PC-3 (cell line): ENCODE measurements at regions of chr15 and their contacts with region 1.

Region 1: DNA sequence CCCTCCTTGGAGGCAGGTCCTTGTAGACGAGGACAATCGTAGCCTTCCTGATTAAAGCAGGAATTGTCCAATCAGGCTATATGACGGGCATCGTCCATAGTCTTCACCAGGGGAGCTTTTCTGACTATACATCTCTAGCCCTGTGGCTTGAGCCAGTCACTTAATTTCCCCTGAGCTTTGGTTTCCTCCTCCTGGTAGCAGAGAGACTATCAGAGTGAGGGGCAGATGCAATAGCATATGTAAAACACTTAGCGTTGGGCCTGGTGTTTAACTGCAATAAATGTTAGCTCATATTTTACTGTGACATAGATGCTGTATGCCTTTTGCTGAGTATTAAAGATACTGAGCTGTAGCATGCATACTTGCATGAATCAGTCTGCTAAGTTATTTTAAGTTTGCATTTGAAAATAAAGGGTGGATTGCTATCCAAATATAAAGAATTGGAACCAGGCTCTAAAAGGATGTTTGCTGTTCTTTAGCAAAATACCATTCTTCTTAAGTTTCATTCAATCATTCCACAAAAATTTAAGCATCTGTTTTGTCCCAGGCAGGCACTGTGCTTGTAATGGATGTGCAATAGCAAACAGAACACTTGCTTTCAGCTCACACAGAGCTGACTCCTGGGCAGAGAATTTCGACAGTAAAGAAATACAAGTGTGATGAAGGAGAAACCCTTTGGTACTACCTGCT is 151.2 kb downstream of the PGPEP1L start:
- DNase-seq: peak; percentile 74
- ATAC-seq: peak; percentile 29
- H3K4me3 ChIP-seq: 0 out of 2 replicates have a peak overlapping the region, but pooled peaks have one; percentile 11
- H3K27ac ChIP-seq: peak overlapping the region; percentile 60
- H3K4me1 ChIP-seq: peaks cover 74% of the 10 kb centered on the region
- H3K27me3 ChIP-seq: no peaks in the 10 kb centered on the region
- CTCF ChIP-seq: no peak

Region 2: GRCh38 chr15:98873441-98874201 is 17.3 kb after region 1 on chr15:
- CTCF ChIA-PET with region 1: interaction called, 6 read pairs
- POLR2A ChIA-PET with region 1: interaction called, 4 read pairs
- intact Hi-C with region 1: loop called (anchors 2 kb)
- DNase-seq: peak; percentile 94
- ATAC-seq: peak; percentile 80
- H3K4me3 ChIP-seq: peak overlapping the region; percentile 55
- H3K27ac ChIP-seq: peak overlapping the region; percentile 94
- H3K4me1 ChIP-seq: peaks cover 54% of the 10 kb centered on the region
- H3K27me3 ChIP-seq: no peaks in the 10 kb centered on the region
- CTCF ChIP-seq: peak; percentile 47

Region 3: DNA sequence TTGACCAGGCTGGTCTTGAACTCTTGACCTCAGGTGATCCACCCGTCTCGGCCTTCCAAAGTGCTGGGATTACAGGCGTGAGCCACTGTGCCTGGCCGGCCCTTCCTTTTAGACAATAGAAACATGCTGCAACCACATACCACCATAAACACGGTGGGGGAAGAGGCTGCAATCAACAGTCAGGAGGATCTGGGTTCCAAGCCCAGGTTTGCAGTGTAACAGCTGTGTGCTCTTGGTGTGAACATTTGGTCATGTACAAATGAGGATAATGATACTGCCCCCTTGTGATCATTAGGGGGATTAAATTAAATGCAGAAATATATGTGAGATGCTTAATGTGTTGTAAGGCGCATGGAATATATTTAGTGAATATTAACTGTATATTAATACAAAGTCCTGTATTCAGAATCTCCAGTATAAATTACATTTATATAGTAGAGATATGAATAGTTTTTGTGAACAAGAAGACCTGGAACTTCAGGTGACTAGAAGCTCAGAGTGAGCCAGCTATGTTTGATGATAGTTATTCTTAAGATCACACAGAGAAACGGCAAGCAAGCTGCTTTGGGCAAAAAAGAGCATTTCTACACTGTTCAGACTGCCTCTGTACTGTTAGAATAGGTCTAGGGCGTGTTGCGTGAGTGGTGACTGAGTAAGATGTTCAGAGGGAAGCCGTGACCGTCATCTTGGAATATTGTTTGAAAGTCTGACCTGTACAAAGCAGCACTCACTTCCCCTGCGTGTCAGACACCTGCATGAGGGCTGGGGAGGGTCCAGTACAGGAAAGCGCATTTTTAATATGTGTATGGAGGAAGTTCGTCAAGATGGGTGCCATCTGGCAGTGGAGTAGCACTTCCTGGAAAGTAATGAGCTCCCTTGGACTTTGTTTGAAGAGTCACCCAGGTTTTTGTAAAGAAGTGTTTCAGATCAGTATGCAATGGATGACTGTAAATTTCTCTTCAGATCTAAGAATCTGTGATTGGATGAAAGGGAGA is 25.5 kb after region 1 on chr15:
- CTCF ChIA-PET with region 1: interaction called, 15 read pairs
- POLR2A ChIA-PET with region 1: no interaction called
- intact Hi-C with region 1: loop called (anchors 1 kb)
- DNase-seq: peak; percentile 65
- ATAC-seq: peak; percentile 59
- H3K4me3 ChIP-seq: no peak overlapping the region
- H3K27ac ChIP-seq: no peak overlapping the region
- H3K4me1 ChIP-seq: peaks cover 9% of the 10 kb centered on the region
- H3K27me3 ChIP-seq: no peaks in the 10 kb centered on the region
- CTCF ChIP-seq: peak; percentile 66

Region 4: GRCh38 chr15:98904544-98904943 is 48.2 kb after region 1 on chr15:
- CTCF ChIA-PET with region 1: interaction called, 5 read pairs
- POLR2A ChIA-PET with region 1: no interaction called
- intact Hi-C with region 1: loop called (anchors 1 kb)
- DNase-seq: peak; percentile 60
- ATAC-seq: peak; percentile 50
- H3K4me3 ChIP-seq: no peak overlapping the region
- H3K27ac ChIP-seq: peak overlapping the region; percentile 81; the same call in 1 of the 2 replicates
- H3K4me1 ChIP-seq: peaks cover 53% of the 10 kb centered on the region
- H3K27me3 ChIP-seq: no peaks in the 10 kb centered on the region
- CTCF ChIP-seq: peak; percentile 84

Region 5: DNA sequence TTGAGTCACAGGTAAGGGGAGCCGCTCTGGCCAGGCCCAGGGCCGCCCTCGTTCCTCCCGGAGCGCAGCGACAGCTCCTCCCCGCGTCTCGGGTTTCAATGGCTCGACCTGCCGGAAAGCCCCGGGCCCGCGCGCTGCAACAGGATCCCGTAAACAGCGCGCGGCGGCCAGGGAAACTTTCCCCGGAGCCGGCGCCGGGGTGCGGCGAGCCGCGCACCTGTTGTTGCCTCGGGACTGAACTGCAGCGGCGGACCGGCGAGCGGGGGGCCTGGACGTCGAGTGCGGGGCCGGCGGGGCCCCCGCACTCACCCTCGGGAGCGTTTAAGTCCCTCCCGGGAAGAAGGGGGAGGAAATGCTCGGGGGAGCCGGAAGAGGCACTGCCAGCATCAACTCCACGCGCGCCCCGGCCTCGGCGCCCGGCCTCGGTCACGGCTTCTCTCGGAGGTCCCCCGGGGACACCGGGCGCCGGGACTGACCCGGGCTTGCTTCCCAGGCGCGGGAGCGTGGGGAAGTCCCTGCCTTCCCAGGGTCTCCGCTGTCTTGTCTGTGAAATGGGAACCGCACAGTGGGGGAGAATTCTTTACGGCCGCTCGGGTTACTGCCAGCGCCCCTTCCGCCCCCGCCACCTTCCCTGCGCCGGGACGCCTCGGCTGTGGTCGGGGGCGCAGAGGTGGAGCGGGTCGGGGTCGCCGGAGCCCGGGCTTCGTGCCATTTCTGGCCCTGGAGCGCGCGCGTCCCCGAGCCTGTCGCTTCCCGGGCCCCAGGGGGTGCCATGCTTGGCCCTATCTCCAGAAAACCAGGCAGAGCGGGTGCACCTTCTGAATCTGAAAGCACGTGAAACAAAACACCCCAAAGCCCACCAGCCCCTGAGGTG is 158.7 kb after region 1 on chr15:
- CTCF ChIA-PET with region 1: no interaction called
- POLR2A ChIA-PET with region 1: interaction called, 10 read pairs
- intact Hi-C with region 1: no loop called
- DNase-seq: peak; percentile 79
- ATAC-seq: peak; percentile 85
- H3K4me3 ChIP-seq: peak overlapping the region; percentile 79
- H3K27ac ChIP-seq: peak overlapping the region; percentile 90
- H3K4me1 ChIP-seq: peaks cover 26% of the 10 kb centered on the region
- H3K27me3 ChIP-seq: no peaks in the 10 kb centered on the region
- CTCF ChIP-seq: no peak

Region 6: GRCh38 chr15:99076552-99077308 is 220.4 kb after region 1 on chr15:
- CTCF ChIA-PET with region 1: interaction called, 5 read pairs
- POLR2A ChIA-PET with region 1: no interaction called
- intact Hi-C with region 1: loop called (anchors 1 kb)
- DNase-seq: peak; percentile 83
- ATAC-seq: peak; percentile 90
- H3K4me3 ChIP-seq: peak overlapping the region; percentile 62
- H3K27ac ChIP-seq: no peak overlapping the region
- H3K4me1 ChIP-seq: no peaks in the 10 kb centered on the region
- H3K27me3 ChIP-seq: no peaks in the 10 kb centered on the region
- CTCF ChIP-seq: peak; percentile 89